ENCODE measurements at regions of chr9 and their contacts with region 1.

Region 1: DNA sequence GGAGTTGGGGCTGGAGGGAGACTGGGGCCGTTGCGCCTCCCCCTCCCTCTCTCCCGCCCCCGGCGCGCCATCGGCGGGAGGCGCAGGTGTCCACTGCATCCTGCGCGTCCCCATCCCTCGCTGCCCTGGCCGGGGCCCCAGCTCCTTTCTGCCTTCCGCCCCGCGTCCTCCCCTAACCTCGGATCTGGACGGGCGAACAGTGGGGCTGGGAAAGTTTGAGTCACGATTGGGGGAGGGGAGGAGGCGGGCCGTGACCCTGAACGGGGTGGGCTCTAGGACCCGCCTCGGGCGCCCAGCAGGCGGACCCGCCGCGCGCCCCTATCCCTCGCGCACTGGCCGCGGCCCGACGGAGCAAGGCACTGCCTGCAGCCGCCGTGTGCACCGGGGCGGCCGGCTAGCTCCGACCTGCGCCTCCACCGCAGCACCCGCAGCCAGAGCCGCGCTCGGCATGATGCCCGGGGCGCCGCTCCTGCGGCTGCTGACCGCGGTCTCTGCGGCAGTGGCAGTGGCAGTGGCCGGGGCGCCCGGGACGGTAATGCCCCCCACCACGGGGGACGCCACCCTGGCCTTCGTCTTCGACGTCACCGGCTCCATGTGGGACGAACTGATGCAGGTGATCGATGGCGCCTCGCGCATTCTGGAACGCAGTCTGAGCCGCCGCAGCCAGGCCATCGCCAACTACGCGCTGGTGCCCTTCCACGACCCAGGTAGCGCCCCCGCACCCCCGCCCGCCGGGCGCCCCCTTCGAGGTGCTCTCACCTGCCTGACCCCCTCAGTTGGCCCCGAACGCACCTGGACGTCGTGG is at the start of gene HMCN2:
- DNase-seq: peak in 4 of 5 donors; percentile 48 to 70 (median 66)
- ATAC-seq: peak in 3 of 4 donors; percentile 58 to 69 (median 64)
- H3K4me3 ChIP-seq: peak within 1 kb of the TSS; percentile 13 to 63 (median 47)
- H3K27ac ChIP-seq: peak within 1 kb of the TSS in 8 of 12 donors; percentile 33 to 84 (median 58)
- H3K4me1 ChIP-seq: peaks cover 0 to 56% (median 15%) of the 10 kb centered on the region in 12 donors
- H3K27me3 ChIP-seq: peaks cover 7 to 53% (median 33%) of the 10 kb centered on the region in 9 donors
- CTCF ChIP-seq: no peak
- POLR2A ChIP-seq: no peak
- total RNA-seq, gene HMCN2: 2.3 to 10.4 (median 3.8) TPM

Region 2: DNA sequence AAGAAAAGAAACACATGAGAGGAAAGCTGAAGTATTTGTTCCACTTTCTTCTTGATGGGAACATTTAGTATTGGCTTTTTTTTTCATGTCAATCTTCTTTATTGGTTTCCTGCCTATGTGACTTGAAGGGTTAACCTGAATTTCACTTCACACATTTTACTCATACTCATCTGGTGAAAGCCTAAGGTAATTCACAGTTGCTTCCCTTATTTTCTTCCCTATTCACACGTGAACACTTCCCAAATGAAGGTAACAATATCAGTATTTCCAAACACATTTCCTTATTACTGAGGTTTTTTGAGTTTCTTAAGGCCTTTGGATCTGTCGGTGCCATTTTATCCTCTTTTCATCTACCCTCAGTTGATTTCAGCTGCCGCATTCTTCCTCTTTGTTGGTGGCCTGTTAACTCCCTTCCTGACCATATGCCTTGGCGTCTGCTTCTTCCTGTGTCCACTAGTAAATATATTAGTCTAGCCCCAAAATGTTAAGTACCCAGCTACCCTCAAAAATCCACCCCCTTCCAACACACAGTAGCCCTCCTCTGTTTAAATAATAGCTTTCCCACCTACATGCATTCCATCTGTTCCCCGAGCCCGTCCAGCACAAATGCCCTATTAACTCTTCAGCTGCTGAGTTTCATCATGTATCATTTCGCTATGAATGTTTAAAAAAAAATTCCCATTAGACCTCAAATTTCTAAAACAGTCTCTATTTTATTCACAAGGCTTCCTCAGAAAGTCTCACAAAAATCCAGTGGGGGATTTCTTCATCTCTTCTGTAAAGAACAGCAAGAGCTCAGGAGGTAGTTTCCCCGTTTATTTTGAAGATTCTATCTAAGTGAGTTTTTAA is 333.1 kb before region 1 on chr9:
- intact Hi-C with region 1: no loop called
- DNase-seq: no peak
- ATAC-seq: peak in 2 of 4 donors; percentile 37 to 47
- H3K4me3 ChIP-seq: peak overlapping the region in 3 of 12 donors; percentile 6 to 7 (median 7)
- H3K27ac ChIP-seq: peak overlapping the region; percentile 5 to 88 (median 62)
- H3K4me1 ChIP-seq: peaks cover 0 to 61% (median 35%) of the 10 kb centered on the region in 12 donors
- H3K27me3 ChIP-seq: no peaks in the 10 kb centered on the region
- CTCF ChIP-seq: no peak
- POLR2A ChIP-seq: no peak

Region 3: DNA sequence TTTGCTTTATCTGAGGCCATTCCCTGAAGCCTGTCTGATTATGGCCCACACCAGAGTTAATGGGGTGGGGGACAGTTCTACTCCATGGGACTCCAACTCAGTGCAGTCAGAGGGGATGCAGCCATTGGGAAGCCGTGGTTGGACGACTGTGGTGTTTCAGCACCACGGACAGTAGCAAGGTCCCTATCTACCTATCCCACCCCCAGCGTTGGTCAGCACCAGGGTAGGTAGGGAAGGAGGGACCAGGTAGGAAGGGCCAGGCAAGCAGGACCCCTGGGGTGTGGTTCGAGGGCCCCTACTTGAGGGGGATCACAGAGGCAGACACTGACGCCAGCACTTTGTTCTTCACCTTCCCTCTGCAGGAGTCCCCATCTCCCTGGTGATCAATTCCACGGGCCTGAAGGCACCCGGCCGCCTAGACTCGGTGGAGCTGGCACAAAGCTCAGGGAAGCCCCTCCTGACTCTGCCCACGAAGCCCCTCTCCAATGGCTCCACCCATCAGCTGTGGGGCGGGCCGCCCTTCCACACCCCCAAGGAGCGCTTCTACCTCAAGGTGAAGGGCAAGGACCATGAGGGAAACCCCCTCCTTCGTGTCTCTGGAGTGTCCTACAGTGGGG is 33.1 kb after region 1 on chr9:
- intact Hi-C with region 1: no loop called
- DNase-seq: peak in 3 of 5 donors; percentile 18 to 45 (median 22)
- ATAC-seq: no peak
- H3K4me3 ChIP-seq: no peak overlapping the region
- H3K27ac ChIP-seq: no peak overlapping the region
- H3K4me1 ChIP-seq: peaks cover 0 to 37% (median 0%) of the 10 kb centered on the region in 12 donors
- H3K27me3 ChIP-seq: no peaks in the 10 kb centered on the region
- CTCF ChIP-seq: no peak
- POLR2A ChIP-seq: no peak

Region 4: DNA sequence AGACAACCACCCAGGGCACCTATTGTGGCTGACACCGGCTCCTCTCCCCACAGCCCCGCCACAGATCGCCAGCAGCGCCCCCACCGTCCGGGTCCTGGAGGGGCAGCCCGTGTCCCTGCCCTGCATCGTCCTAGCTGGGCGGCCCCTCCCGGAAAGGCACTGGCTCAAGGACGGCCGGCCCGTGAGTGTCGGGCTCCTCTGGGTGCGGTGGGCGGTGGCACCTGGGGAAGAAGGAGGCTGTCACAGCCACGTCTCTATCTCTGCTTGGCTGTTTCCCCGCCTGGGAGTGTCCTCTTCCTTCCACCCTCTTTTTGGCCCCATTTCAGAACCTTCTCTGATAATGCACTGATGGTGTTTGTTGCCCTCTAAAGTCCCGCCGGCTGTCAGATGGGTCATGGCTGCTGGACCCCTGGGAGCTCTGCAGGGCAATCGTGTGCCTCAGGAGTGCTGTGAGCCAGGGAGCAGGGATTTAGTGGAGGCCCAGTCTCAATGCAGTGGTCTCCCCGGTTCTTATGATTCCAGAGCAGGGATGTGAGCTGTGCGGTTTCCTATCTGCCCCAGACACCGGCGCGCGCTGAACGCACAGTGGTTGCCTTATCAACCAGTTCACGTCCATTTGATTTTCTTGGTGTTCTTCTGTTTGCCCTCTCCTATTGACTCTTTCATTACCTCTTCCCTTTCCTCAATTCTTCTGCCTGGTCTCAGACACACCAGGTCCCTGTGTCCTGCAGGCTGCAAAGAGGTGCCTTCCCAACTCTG is 55.3 kb after region 1 on chr9:
- intact Hi-C with region 1: loop called in 1 of 10 experiments (anchors 5 kb)
- DNase-seq: no peak
- ATAC-seq: peak in 3 of 4 donors; percentile 25 to 73 (median 43)
- H3K4me3 ChIP-seq: peak overlapping the region in 2 of 12 donors; percentile 10 to 11
- H3K27ac ChIP-seq: peak overlapping the region in 1 of 12 donors; percentile 75
- H3K4me1 ChIP-seq: peaks cover 0 to 22% (median 3%) of the 10 kb centered on the region in 12 donors
- H3K27me3 ChIP-seq: peaks cover 0 to 26% (median 4%) of the 10 kb centered on the region in 9 donors
- CTCF ChIP-seq: peak in 3 of 12 donors; percentile 25 to 38 (median 27)
- POLR2A ChIP-seq: no peak

Region 5: DNA sequence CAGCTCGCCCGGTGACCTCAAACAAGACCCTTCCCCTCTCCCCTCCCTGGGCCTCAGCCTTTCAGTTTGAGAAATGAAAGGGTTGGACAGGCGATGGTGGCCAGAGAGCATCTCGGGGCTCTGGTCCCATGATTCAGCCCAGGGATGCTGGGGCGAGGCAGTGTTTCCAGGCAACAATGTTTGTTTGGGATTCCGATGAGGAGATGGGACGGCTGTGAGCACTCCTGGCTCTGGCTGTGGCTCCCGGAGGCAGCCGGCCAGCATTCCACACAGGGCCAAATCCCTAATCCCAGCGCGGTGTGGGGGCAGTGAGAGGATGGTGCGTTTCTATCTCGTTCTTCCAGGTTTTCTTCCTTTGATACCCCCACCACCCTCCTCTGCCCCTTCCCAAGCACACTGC is 65.9 kb after region 1 on chr9:
- intact Hi-C with region 1: loop called in 2 of 10 experiments (anchors 10 kb)
- DNase-seq: peak; percentile 64 to 86 (median 82)
- ATAC-seq: peak; percentile 54 to 80 (median 66)
- H3K4me3 ChIP-seq: no peak overlapping the region
- H3K27ac ChIP-seq: peak overlapping the region in 8 of 12 donors; percentile 30 to 87 (median 47)
- H3K4me1 ChIP-seq: peaks cover 0 to 37% (median 8%) of the 10 kb centered on the region in 12 donors
- H3K27me3 ChIP-seq: peaks cover 0 to 17% (median 4%) of the 10 kb centered on the region in 9 donors
- CTCF ChIP-seq: no peak
- POLR2A ChIP-seq: no peak